Activated naive CD4-positive, alpha-beta T cell treated with anti-CD3 and anti-CD28 coated beads for 36 hours (primary cell): ENCODE measurements at regions of chr7 and their contacts with region 1.

Region 1: GRCh38 chr7:97179454-97180104 is 62.1 kb downstream of the SDHAF3 start:
- DNase-seq: peak; percentile 66
- H3K4me3 Mint-ChIP-seq: no peak overlapping the region
- H3K27ac Mint-ChIP-seq: no peak overlapping the region
- H3K4me1 Mint-ChIP-seq: peaks cover 3% of the 10 kb centered on the region
- H3K27me3 Mint-ChIP-seq: no peaks in the 10 kb centered on the region

Region 2: DNA sequence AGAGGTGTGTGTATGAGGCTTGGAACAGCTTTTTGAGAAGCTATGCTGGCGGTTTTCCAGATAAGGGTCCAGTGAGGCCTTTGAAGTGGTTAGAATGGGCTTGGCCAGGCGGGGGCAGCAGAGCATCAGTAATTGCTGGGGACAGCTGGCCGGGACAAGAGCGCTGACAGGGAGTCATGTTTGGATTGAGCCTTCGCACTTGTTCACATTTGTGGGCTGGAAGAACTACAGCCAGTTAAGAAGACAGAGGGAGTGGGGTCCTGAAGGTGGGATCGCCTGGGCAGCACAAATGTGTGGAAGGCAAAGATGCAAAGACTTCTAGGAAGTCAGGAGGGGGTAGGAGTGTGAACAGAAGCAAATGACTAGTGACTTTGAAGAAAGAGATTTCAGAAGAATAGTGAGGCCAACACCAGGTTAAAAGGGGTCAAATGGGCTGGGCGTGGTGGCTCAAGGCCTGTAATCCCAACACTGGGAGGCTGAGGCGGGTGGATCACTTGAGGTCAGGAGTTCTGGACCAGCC is 74.8 kb before region 1 on chr7:
- CTCF ChIA-PET with region 1: interaction called, 9 read pairs
- intact Hi-C with region 1: loop called (anchors 1 kb)
- DNase-seq: peak; percentile 81
- H3K4me3 Mint-ChIP-seq: no peak overlapping the region
- H3K27ac Mint-ChIP-seq: no peak overlapping the region
- H3K4me1 Mint-ChIP-seq: no peaks in the 10 kb centered on the region
- H3K27me3 Mint-ChIP-seq: peaks cover 34% of the 10 kb centered on the region

Region 3: GRCh38 chr7:97145068-97145467 is 34.5 kb before region 1 on chr7:
- CTCF ChIA-PET with region 1: interaction called, 7 read pairs
- intact Hi-C with region 1: loop called (anchors 1 kb)
- DNase-seq: no peak
- H3K4me3 Mint-ChIP-seq: no peak overlapping the region
- H3K27ac Mint-ChIP-seq: no peak overlapping the region
- H3K4me1 Mint-ChIP-seq: peaks cover 3% of the 10 kb centered on the region
- H3K27me3 Mint-ChIP-seq: no peaks in the 10 kb centered on the region

Region 4: GRCh38 chr7:97155897-97156418 is 23.6 kb before region 1 on chr7:
- CTCF ChIA-PET with region 1: no interaction called
- intact Hi-C with region 1: no loop called
- DNase-seq: no peak
- H3K4me3 Mint-ChIP-seq: no peak overlapping the region
- H3K27ac Mint-ChIP-seq: no peak overlapping the region
- H3K4me1 Mint-ChIP-seq: peaks cover 10% of the 10 kb centered on the region
- H3K27me3 Mint-ChIP-seq: no peaks in the 10 kb centered on the region

Region 5: DNA sequence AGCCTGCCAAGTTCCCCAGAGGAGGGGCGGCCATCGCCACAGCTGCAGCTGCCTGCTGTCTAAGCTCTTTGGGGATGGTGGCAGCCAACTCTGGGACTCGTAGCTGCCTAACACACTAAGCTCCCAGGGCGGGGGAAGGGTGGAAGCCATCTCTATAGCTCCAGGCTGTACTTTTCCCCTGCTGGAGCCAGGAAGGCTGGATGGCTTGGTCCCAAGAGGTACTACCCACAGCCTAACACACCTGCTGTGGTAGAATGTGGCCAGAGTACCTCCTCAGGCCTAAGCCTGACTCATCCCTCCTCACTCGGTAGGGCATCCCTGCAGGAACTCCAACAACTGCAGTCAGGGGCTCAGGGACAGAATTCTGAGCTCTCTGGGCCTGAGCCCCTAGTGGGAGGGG is 400.6 kb after region 1 on chr7:
- CTCF ChIA-PET with region 1: no interaction called
- intact Hi-C with region 1: no loop called
- DNase-seq: no peak
- H3K4me3 Mint-ChIP-seq: no peak overlapping the region
- H3K27ac Mint-ChIP-seq: no peak overlapping the region
- H3K4me1 Mint-ChIP-seq: no peaks in the 10 kb centered on the region
- H3K27me3 Mint-ChIP-seq: no peaks in the 10 kb centered on the region